ENCODE measurements at regions of chr2 and their contacts with region 1.

Region 1: GRCh38 chr2:71389384-71390072 is 57.9 kb downstream of the ZNF638 start:
- DNase-seq: no peak
- ATAC-seq: no peak
- H3K4me3 ChIP-seq: no peak overlapping the region
- H3K27ac ChIP-seq: no peak overlapping the region
- H3K4me1 ChIP-seq: peaks cover 7% of the 10 kb centered on the region
- H3K27me3 ChIP-seq: no peaks in the 10 kb centered on the region
- CTCF ChIP-seq: no peak

Region 2: GRCh38 chr2:71071667-71072398 is 317.7 kb before region 1 on chr2:
- intact Hi-C with region 1: no loop called
- DNase-seq: no peak
- ATAC-seq: no peak
- H3K4me3 ChIP-seq: no peak overlapping the region
- H3K27ac ChIP-seq: no peak overlapping the region
- H3K4me1 ChIP-seq: peaks cover 21% of the 10 kb centered on the region
- H3K27me3 ChIP-seq: no peaks in the 10 kb centered on the region
- CTCF ChIP-seq: no peak

Region 3: DNA sequence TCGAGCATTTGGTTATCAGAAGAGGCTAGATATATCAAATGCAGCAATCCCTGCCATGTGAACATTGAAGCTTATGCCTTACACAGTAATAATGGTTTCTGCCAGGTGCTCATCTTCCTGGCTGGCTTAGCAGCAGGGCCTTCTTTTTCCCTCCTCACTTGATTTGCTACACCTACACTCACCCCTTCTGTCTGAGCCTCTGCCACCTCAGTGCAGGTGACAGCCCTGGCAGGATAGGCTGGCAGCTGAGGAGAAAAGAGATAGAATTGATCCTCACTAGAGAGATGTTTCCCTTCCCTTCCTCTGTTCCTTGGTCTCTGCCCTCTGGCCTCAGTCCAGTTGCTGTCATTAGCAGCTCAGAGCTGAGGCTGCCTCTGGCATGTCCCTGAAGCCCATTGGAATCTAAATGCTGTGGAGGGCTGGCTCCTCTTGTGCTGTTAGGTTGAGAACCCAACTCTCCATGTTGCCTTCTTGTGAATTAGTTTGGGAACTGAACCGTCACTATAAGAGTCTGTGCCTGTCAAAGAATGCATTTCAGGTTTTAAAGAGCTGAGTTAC is 240.9 kb before region 1 on chr2:
- intact Hi-C with region 1: loop called in 1 of 2 experiments (anchors 10 kb)
- DNase-seq: no peak
- ATAC-seq: peak in 2 of 4 donors; percentile 29 to 36
- H3K4me3 ChIP-seq: no peak overlapping the region
- H3K27ac ChIP-seq: no peak overlapping the region
- H3K4me1 ChIP-seq: peaks cover 6% of the 10 kb centered on the region
- H3K27me3 ChIP-seq: no peaks in the 10 kb centered on the region
- CTCF ChIP-seq: no peak

Region 4: GRCh38 chr2:71358931-71359671 is 30.4 kb before region 1 on chr2:
- intact Hi-C with region 1: no loop called
- DNase-seq: peak; percentile 57 to 73
- ATAC-seq: peak; percentile 84 to 96 (median 90)
- H3K4me3 ChIP-seq: no peak overlapping the region
- H3K27ac ChIP-seq: no peak overlapping the region
- H3K4me1 ChIP-seq: peaks cover 32% of the 10 kb centered on the region
- H3K27me3 ChIP-seq: no peaks in the 10 kb centered on the region
- CTCF ChIP-seq: no peak

Region 5: GRCh38 chr2:71498261-71498701 is 108.8 kb after region 1 on chr2:
- intact Hi-C with region 1: no loop called
- DNase-seq: no peak
- ATAC-seq: peak; percentile 9 to 47 (median 44)
- H3K4me3 ChIP-seq: no peak overlapping the region
- H3K27ac ChIP-seq: peak overlapping the region; percentile 78
- H3K4me1 ChIP-seq: peaks cover 65% of the 10 kb centered on the region
- H3K27me3 ChIP-seq: no peaks in the 10 kb centered on the region
- CTCF ChIP-seq: no peak

Measured in psoas muscle (tissue), 8 donors.